CD8-positive, alpha-beta memory T cell (primary cell): ENCODE measurements at regions of chr1 and their contacts with region 1.

Region 1: GRCh38 chr1:236156512-236157208 is 14.3 kb downstream of the GPR137B start:
- DNase-seq: peak in 4 of 5 donors; percentile 34 to 81 (median 60)
- H3K4me3 ChIP-seq: no peak overlapping the region
- H3K4me3 Mint-ChIP-seq: peak overlapping the region; percentile 38 to 81 (median 75)
- H3K27ac ChIP-seq: peak overlapping the region; percentile 18
- H3K27ac Mint-ChIP-seq: peak overlapping the region; percentile 76 to 94 (median 90)
- H3K4me1 ChIP-seq: peaks cover 27% of the 10 kb centered on the region
- H3K4me1 Mint-ChIP-seq: peaks cover 47 to 68% (median 68%) of the 10 kb centered on the region in 3 donors
- H3K27me3 ChIP-seq: no peaks in the 10 kb centered on the region
- H3K27me3 Mint-ChIP-seq: no peaks in the 10 kb centered on the region

Region 2: DNA sequence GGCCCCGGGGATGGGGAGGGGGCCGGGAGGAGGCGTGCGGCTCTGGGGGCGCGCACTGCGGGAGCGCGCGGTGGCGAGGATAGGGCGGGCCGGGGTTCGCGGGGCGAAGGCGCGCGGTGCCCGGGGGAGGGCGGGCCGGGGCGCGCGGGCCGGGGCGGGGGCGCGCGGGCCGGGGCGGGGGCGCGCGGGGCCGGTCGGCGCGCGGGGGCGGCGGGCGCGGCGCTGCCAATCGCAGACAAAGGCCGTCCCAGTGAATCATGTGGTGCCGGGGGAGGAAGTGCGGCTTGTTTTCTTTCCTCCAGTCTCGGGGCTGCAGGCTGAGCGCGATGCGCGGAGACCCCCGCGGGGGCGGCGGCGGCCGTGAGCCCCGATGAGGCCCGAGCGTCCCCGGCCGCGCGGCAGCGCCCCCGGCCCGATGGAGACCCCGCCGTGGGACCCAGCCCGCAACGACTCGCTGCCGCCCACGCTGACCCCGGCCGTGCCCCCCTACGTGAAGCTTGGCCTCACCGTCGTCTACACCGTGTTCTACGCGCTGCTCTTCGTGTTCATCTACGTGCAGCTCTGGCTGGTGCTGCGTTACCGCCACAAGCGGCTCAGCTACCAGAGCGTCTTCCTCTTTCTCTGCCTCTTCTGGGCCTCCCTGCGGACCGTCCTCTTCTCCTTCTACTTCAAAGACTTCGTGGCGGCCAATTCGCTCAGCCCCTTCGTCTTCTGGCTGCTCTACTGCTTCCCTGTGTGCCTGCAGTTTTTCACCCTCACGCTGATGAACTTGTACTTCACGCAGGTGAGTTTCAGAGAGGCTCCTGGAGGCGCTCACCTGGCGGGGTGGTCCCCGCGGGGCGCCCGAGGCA is 14.2 kb before region 1 on chr1 and contains the start of gene GPR137B:
- CTCF ChIA-PET with region 1: no interaction called
- POLR2A ChIA-PET with region 1: interaction called, 10 read pairs
- DNase-seq: peak; percentile 34 to 76 (median 53)
- H3K4me3 ChIP-seq: peak within 1 kb of the TSS; percentile 64
- H3K4me3 Mint-ChIP-seq: peak within 1 kb of the TSS; percentile 93 to 99 (median 98)
- H3K27ac ChIP-seq: peak within 1 kb of the TSS; percentile 56
- H3K27ac Mint-ChIP-seq: peak within 1 kb of the TSS in 6 of 8 donors; percentile 59 to 95 (median 91)
- H3K4me1 ChIP-seq: peaks cover 26% of the 10 kb centered on the region
- H3K4me1 Mint-ChIP-seq: peaks cover 39 to 53% (median 42%) of the 10 kb centered on the region in 3 donors
- H3K27me3 ChIP-seq: peaks cover 14% of the 10 kb centered on the region
- H3K27me3 Mint-ChIP-seq: peaks cover 14 to 16% of the 10 kb centered on the region in 2 donors
- total RNA-seq, gene GPR137B: 8.3 to 8.8 TPM